Transverse colon (tissue), 4 donors: ENCODE measurements at regions of chr16 and their contacts with region 1.

Region 1: GRCh38 chr16:27729516-27730304 is 179.8 kb downstream of the KATNIP start:
- DNase-seq: no peak
- H3K4me3 ChIP-seq: no peak overlapping the region
- H3K27ac ChIP-seq: no peak overlapping the region
- H3K4me1 ChIP-seq: peaks cover 4 to 6% (median 5%) of the 10 kb centered on the region in 4 donors
- H3K27me3 ChIP-seq: no peaks in the 10 kb centered on the region
- CTCF ChIP-seq: no peak
- EP300 ChIP-seq: no peak
- POLR2A ChIP-seq: no peak

Region 2: GRCh38 chr16:27650073-27650701 is 79.5 kb before region 1 on chr16:
- in situ Hi-C with region 1: loop called in 1 of 4 experiments (anchors 5 kb)
- intact Hi-C with region 1: no loop called
- DNase-seq: peak; percentile 21
- H3K4me3 ChIP-seq: no peak overlapping the region
- H3K27ac ChIP-seq: peak overlapping the region in 2 of 4 donors; percentile 44 to 45
- H3K4me1 ChIP-seq: peaks cover 0 to 3% (median 0%) of the 10 kb centered on the region in 4 donors
- H3K27me3 ChIP-seq: no peaks in the 10 kb centered on the region
- CTCF ChIP-seq: no peak
- EP300 ChIP-seq: no peak
- POLR2A ChIP-seq: no peak

Region 3: DNA sequence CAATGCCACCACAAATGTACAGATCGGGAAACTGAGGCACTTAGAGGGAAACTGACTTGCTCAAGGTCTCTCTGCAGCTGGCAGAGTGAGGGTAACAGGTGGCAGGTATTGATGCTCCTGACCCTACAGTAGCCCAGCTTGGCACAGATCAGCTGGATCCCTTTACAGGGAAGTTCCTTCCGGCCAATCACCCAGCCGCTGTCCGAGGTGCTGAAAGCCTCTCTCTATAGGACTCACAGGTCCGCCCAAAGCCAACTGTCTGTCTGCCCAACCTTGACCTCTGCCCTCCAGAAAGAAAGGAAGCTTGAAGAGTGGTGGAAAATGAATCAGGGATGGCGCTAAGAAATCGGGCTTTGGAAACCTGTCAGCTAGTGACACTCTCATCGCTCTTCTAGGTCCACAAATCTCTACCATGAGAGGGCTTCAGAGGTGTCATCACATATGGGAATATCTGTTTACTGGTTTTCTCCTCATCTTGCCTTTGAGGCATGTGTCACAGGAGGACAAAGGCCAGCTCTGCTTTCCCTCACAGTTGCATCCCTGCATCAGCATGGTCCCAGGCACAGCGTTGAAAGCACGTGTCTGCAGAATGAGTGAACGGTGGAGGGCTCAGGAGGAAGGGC is 66.4 kb after region 1 on chr16:
- in situ Hi-C with region 1: no loop called
- intact Hi-C with region 1: no loop called
- DNase-seq: peak; percentile 27
- H3K4me3 ChIP-seq: no peak overlapping the region
- H3K27ac ChIP-seq: no peak overlapping the region
- H3K4me1 ChIP-seq: no peaks in the 10 kb centered on the region
- H3K27me3 ChIP-seq: no peaks in the 10 kb centered on the region
- CTCF ChIP-seq: no peak
- EP300 ChIP-seq: no peak
- POLR2A ChIP-seq: no peak

Region 4: GRCh38 chr16:27859020-27859419 is 129.3 kb after region 1 on chr16:
- in situ Hi-C with region 1: no loop called
- intact Hi-C with region 1: no loop called
- DNase-seq: no peak
- H3K4me3 ChIP-seq: no peak overlapping the region
- H3K27ac ChIP-seq: no peak overlapping the region
- H3K4me1 ChIP-seq: no peaks in the 10 kb centered on the region
- H3K27me3 ChIP-seq: no peaks in the 10 kb centered on the region
- CTCF ChIP-seq: no peak
- EP300 ChIP-seq: no peak
- POLR2A ChIP-seq: no peak

Region 5: GRCh38 chr16:28063641-28064061 is 333.9 kb after region 1 on chr16 and contains the start of gene GSG1L:
- in situ Hi-C with region 1: no loop called
- intact Hi-C with region 1: loop called (anchors 10 kb)
- DNase-seq: no peak
- H3K4me3 ChIP-seq: peak within 1 kb of the TSS in 2 of 4 donors; percentile 21 to 42
- H3K27ac ChIP-seq: no peak within 1 kb of the TSS
- H3K4me1 ChIP-seq: peaks cover 0 to 5% (median 0%) of the 10 kb centered on the region in 4 donors
- H3K27me3 ChIP-seq: peaks cover 61% of the 10 kb centered on the region
- CTCF ChIP-seq: no peak
- EP300 ChIP-seq: no peak
- POLR2A ChIP-seq: no peak
- total RNA-seq, gene GSG1L: not detected